Lower leg skin (tissue), 4 donors: ENCODE measurements at regions of chr9 and their contacts with region 1.

Region 1: GRCh38 chr9:109499631-109500410 is 1.7 kb upstream of the PTPN3 start:
- DNase-seq: peak in 1 of 2 donors; percentile 91
- H3K4me3 ChIP-seq: no peak overlapping the region
- CTCF ChIP-seq: no peak
- POLR2A ChIP-seq: no peak

Region 2: GRCh38 chr9:108511307-108511706 is 988.5 kb before region 1 on chr9:
- intact Hi-C with region 1: loop called (anchors 5 kb)
- DNase-seq: no peak
- H3K4me3 ChIP-seq: no peak overlapping the region
- CTCF ChIP-seq: no peak
- POLR2A ChIP-seq: no peak

Region 3: GRCh38 chr9:109224751-109225150 is 275.1 kb before region 1 on chr9:
- intact Hi-C with region 1: no loop called
- DNase-seq: no peak
- H3K4me3 ChIP-seq: no peak overlapping the region
- CTCF ChIP-seq: no peak
- POLR2A ChIP-seq: no peak

Region 4: GRCh38 chr9:109440797-109441287 is 59.0 kb before region 1 on chr9:
- intact Hi-C with region 1: no loop called
- DNase-seq: peak in 1 of 2 donors; percentile 77
- H3K4me3 ChIP-seq: no peak overlapping the region
- CTCF ChIP-seq: peak in 1 of 3 donors; percentile 64
- POLR2A ChIP-seq: no peak